B cell (primary cell): ENCODE measurements at regions of chr17 and their contacts with region 1.

Region 1: GRCh38 chr17:67862614-67863217 is 37.4 kb downstream of the BPTF start:
- DNase-seq: peak; percentile 23
- ATAC-seq: no peak
- H3K4me3 ChIP-seq: no peak overlapping the region
- H3K4me3 Mint-ChIP-seq: no peak overlapping the region
- H3K27ac ChIP-seq: peak overlapping the region in 1 of 2 donors; percentile 15
- H3K27ac Mint-ChIP-seq: no peak overlapping the region
- H3K4me1 ChIP-seq: peaks cover 3 to 5% of the 10 kb centered on the region in 2 donors
- H3K4me1 Mint-ChIP-seq: peaks cover 55% of the 10 kb centered on the region
- H3K27me3 ChIP-seq: no peaks in the 10 kb centered on the region
- H3K27me3 Mint-ChIP-seq: no peaks in the 10 kb centered on the region
- CTCF ChIP-seq: no peak

Region 2: GRCh38 chr17:67746704-67747571 is 115.8 kb before region 1 on chr17:
- CTCF ChIA-PET with region 1: no interaction called
- POLR2A ChIA-PET with region 1: no interaction called
- intact Hi-C with region 1: no loop called
- DNase-seq: no peak
- ATAC-seq: no peak
- H3K4me3 ChIP-seq: no peak overlapping the region
- H3K4me3 Mint-ChIP-seq: no peak overlapping the region
- H3K27ac ChIP-seq: peak overlapping the region in 1 of 2 donors; percentile 19
- H3K27ac Mint-ChIP-seq: no peak overlapping the region
- H3K4me1 ChIP-seq: no peaks in the 10 kb centered on the region
- H3K4me1 Mint-ChIP-seq: no peaks in the 10 kb centered on the region
- H3K27me3 ChIP-seq: no peaks in the 10 kb centered on the region
- H3K27me3 Mint-ChIP-seq: no peaks in the 10 kb centered on the region
- CTCF ChIP-seq: no peak

Region 3: DNA sequence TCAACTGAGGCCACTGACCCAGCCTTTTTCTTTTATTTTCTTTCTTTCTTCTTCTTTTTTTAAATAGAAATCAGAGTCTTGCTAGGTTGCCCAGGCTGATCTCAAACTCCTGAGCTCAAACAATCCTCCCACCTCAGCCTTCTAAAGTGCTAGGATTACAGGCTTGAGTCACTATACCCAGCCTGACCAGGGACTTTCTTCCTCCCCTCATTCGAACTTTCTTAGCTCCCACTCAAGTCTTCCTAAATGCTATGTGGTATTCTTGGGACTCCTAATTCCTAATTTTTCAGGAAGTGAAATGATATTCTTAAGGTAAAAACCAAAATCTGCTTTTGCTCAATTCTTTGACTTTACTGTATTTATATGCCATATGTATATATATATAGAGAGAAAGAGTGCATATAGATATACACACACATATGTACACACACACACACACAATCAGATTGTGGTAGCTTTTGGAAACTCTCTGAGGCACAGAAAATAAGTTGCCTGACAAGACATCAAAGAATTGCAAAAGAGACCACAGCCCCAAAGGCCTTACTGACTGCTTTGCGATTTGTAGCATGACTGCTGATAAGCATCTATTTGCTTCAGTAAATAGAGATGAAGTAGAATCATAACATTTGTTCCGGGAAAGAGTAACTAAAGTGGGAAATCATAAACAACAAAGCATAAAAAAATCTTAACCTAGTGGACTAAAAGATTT is 375.6 kb after region 1 on chr17:
- CTCF ChIA-PET with region 1: no interaction called
- POLR2A ChIA-PET with region 1: interaction called, 10 read pairs
- intact Hi-C with region 1: no loop called
- DNase-seq: no peak
- ATAC-seq: no peak
- H3K4me3 ChIP-seq: peak overlapping the region; percentile 11 to 61 (median 49)
- H3K4me3 Mint-ChIP-seq: peak overlapping the region; percentile 85
- H3K27ac ChIP-seq: peak overlapping the region; percentile 99 to 100
- H3K27ac Mint-ChIP-seq: peak overlapping the region; percentile 99
- H3K4me1 ChIP-seq: peaks cover 42 to 60% of the 10 kb centered on the region in 2 donors
- H3K4me1 Mint-ChIP-seq: peaks cover 65% of the 10 kb centered on the region
- H3K27me3 ChIP-seq: no peaks in the 10 kb centered on the region
- H3K27me3 Mint-ChIP-seq: no peaks in the 10 kb centered on the region
- CTCF ChIP-seq: no peak